OCI-LY7 (cell line): ENCODE measurements at regions of chr19 and their contacts with region 1.

Region 1: DNA sequence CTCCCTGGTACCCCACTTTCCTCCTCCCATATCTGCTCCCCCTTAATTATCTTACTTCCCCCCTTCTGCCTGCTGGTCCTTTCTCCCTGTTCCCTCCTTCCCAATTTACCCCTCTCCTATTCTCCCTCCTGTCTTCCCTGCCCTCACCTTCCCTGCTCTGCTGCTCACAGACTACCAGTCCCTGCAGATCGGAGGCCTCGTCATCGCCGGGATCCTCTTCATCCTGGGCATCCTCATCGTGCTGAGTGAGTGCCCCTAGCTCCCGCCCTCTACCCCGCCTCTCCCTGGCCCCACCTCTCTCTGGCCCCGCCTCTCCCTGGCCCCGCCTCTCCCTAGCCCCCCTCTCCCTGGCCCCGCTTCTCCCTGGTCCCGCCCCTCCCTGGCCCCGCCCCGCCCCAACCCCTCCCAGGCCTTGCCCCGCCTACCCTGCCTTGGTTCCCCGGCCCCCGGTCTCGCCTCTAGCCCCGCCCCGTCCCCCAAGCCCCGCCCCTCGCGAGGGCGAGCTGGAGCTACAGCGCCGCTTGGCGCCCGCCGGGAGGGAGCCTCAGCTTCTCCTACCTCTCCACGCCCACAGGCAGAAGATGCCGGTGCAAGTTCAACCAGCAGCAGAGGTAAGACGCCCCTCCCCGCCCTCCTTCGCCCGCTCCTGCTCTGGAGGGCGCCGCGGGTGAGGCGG is 2.0 kb upstream of the FXYD7 start:
- DNase-seq: peak; percentile 96
- H3K4me3 ChIP-seq: peak overlapping the region; percentile 67
- H3K27ac ChIP-seq: peak overlapping the region; percentile 44
- H3K4me1 ChIP-seq: peaks cover 43% of the 10 kb centered on the region
- CTCF ChIP-seq: peak; percentile 70

Region 2: DNA sequence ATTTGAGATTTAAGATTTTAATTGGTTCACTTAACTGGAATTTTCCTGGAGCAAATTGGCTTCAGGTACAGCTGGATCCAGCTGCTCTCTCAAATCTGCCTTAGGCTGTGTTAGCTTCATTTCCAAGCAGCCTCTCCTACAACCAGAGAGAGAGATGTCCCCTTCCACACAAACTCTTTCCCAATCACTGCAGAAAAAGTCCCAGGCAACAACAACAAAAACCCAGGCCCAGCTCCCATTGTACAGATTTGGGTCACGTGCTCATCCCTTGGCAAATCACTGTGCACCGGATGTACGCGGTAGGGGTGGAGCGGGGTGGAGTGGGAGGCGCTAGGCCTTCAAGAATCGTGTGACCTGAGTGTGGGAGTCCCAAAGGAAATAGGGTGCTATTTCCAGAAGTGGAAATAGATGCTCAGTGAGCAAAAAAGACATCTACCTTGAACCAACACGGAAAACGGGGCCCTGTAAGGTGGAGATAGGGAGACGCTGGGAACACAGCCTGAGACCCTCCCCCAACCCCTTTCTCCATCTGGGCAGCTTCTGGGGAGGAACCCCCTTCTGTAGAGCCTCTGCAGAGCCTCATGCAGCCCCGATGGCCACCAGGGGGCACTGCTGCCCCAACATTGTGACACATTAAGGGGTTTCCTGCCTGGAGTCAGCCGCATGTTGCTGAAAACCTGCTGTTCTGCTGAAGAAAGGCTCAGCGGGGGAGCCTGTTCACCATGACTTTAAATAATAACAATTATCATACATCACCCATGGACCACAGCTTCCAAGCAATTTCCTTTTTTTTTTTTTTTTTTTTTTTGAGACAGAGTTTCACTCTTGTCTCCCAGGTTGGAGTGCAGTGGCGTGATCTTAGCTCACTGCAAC is 74.2 kb before region 1 on chr19:
- CTCF ChIA-PET with region 1: interaction called, 16 read pairs
- POLR2A ChIA-PET with region 1: interaction called, 17 read pairs
- intact Hi-C with region 1: no loop called
- DNase-seq: peak; percentile 97
- H3K4me3 ChIP-seq: peak overlapping the region; percentile 58
- H3K27ac ChIP-seq: peak overlapping the region; percentile 69
- H3K4me1 ChIP-seq: peaks cover 40% of the 10 kb centered on the region
- CTCF ChIP-seq: peak; percentile 99

Region 3: GRCh38 chr19:35193869-35194665 is 53.0 kb after region 1 on chr19:
- CTCF ChIA-PET with region 1: interaction called, 12 read pairs
- POLR2A ChIA-PET with region 1: interaction called, 6 read pairs
- intact Hi-C with region 1: no loop called
- DNase-seq: peak; percentile 29
- H3K4me3 ChIP-seq: no peak overlapping the region
- H3K27ac ChIP-seq: no peak overlapping the region
- H3K4me1 ChIP-seq: no peaks in the 10 kb centered on the region
- CTCF ChIP-seq: peak; percentile 38; the same call in 1 of the 2 replicates

Region 4: GRCh38 chr19:35247526-35248306 is 106.6 kb after region 1 on chr19:
- CTCF ChIA-PET with region 1: no interaction called
- POLR2A ChIA-PET with region 1: interaction called, 4 read pairs
- intact Hi-C with region 1: loop called (anchors 1 kb)
- DNase-seq: peak; percentile 92
- H3K4me3 ChIP-seq: peak overlapping the region; percentile 82
- H3K27ac ChIP-seq: peak overlapping the region; percentile 69
- H3K4me1 ChIP-seq: peaks cover 21% of the 10 kb centered on the region
- CTCF ChIP-seq: peak; percentile 71

Region 5: GRCh38 chr19:35285095-35285449 is 144.0 kb after region 1 on chr19:
- CTCF ChIA-PET with region 1: interaction called, 20 read pairs
- POLR2A ChIA-PET with region 1: no interaction called
- intact Hi-C with region 1: no loop called
- DNase-seq: no peak
- H3K4me3 ChIP-seq: no peak overlapping the region
- H3K27ac ChIP-seq: no peak overlapping the region
- H3K4me1 ChIP-seq: peaks cover 12% of the 10 kb centered on the region
- CTCF ChIP-seq: no peak